Caco-2 (cell line): ENCODE measurements at regions of chrX and their contacts with region 1.

Region 1: GRCh38 chrX:153794018-153794896 is at the starts of genes IDH3G and SSR4:
- DNase-seq: peak; percentile 92
- H3K4me3 ChIP-seq: peak within 1 kb of the TSS; percentile 52
- H3K4me3 Mint-ChIP-seq: peak within 1 kb of the TSS; percentile 90
- H3K27ac Mint-ChIP-seq: peak within 1 kb of the TSS; percentile 89
- H3K4me1 ChIP-seq: 0 out of 2 replicates have a peak, but pooled peaks cover 4% of the 10 kb centered on the region
- H3K4me1 Mint-ChIP-seq: no peaks in the 10 kb centered on the region
- H3K27me3 ChIP-seq: no peaks in the 10 kb centered on the region
- H3K27me3 Mint-ChIP-seq: no peaks in the 10 kb centered on the region
- CTCF ChIP-seq: no peak
- total RNA-seq, gene IDH3G: 53.3 and 54.0 TPM in 2 replicates
- total RNA-seq, gene SSR4: 353 and 373 TPM in 2 replicates

Region 2: GRCh38 chrX:153551135-153551534 is 243.1 kb before region 1 on chrX:
- CTCF ChIA-PET with region 1: no interaction called
- POLR2A ChIA-PET with region 1: no interaction called
- intact Hi-C with region 1: no loop called
- DNase-seq: no peak
- H3K4me3 ChIP-seq: no peak overlapping the region
- H3K4me3 Mint-ChIP-seq: no peak overlapping the region
- H3K27ac Mint-ChIP-seq: no peak overlapping the region
- H3K4me1 ChIP-seq: no peaks in the 10 kb centered on the region
- H3K4me1 Mint-ChIP-seq: no peaks in the 10 kb centered on the region
- H3K27me3 ChIP-seq: no peaks in the 10 kb centered on the region
- H3K27me3 Mint-ChIP-seq: no peaks in the 10 kb centered on the region
- CTCF ChIP-seq: no peak

Region 3: DNA sequence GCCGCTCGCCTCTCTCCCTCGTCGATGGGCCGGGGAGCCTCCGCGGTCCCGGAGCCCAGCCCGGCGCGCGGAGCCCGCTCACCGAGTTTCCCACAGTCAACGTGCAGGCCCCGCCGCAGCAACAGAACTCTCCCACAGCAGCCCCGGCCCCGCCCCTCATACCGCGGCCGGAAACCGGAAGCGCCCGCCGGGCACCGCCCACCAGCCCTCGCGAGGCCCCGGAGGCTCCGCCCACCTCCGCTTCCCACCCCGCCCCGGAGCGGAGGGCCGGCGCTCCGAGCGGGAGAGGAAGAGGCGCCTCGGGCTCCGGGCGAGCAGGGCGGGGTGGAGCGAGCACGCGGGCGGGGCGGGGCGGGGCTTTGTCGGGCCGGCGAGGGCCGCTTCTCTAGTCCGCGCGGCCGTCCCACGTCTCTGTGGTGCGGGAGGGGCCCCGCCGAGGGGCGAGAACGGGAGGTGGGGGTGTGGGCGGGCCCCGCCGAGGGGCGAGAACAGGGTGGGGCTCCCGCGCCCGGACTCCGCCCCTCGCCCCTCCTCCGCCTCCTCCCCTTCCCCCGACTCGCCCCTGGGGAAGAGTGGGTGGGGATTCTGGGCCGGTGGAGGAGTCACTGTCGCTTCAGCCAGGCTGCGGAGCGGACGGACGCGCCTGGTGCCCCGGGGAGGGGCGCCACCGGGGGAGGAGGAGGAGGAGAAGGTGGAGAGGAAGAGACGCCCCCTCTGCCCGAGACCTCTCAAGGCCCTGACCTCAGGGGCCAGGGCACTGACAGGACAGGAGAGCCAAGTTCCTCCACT is 69.8 kb before region 1 on chrX and contains the starts of genes ABCD1 and BCAP31:
- CTCF ChIA-PET with region 1: no interaction called
- POLR2A ChIA-PET with region 1: no interaction called
- intact Hi-C with region 1: loop called (anchors 5 kb)
- DNase-seq: peak; percentile 89 to 92
- H3K4me3 ChIP-seq: peak within 1 kb of the TSS; percentile 49
- H3K4me3 Mint-ChIP-seq: peak within 1 kb of the TSS; percentile 79
- H3K27ac Mint-ChIP-seq: peak within 1 kb of the TSS; percentile 70
- H3K4me1 ChIP-seq: peaks cover 14% of the 10 kb centered on the region
- H3K4me1 Mint-ChIP-seq: no peaks in the 10 kb centered on the region
- H3K27me3 ChIP-seq: no peaks in the 10 kb centered on the region
- H3K27me3 Mint-ChIP-seq: no peaks in the 10 kb centered on the region
- CTCF ChIP-seq: no peak
- total RNA-seq, gene ABCD1: 4.3 and 4.5 TPM in 2 replicates
- total RNA-seq, gene BCAP31: 232 and 234 TPM in 2 replicates